Right cardiac atrium (tissue), 5 donors: ENCODE measurements at regions of chr16 and their contacts with region 1.

Region 1: DNA sequence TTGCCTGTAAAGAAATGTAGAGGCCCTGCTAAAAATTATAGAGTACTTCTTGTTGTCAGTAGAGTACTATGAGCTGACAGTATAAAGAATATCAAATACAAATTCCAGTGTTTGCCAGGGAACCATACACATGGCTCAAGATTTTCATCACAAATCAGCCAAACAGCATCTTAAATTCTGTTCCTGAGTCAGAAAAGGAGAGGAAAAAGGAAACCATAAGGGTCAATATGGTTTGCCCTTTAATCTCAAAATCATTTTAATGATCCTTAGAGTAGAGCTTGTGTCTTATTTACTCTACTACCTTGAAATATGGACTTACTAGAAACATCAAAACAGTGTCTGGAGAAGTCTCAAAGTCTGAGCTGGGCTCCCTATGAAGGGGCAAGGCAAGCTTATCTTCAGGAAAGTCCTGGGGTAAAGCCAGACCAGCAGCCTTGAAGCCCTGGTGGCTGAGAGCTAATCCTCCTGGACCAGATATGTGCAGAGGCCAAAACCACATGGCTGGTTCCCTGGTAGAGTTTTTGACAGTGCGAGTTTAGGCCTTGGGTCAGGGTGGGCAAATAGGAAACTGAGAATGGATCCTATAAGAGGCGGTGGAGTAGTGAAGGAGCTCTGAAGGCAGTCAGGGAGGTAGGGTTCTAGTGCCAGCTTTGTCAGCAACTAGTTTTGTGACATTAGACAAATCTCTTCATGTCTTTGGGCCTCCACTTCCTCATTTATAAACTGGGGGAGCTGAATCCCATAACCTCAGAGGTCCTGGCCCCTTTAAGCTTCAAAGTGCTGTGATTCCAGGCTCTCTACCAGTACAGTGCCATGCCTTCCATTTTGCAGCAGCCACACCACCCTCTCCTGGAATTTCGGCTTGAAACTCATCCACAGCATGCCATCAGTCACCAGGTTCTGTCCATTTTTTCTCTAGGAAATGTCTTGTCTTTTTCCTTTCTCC is 38.9 kb downstream of the MRTFB start:
- DNase-seq: no peak
- ATAC-seq: no peak
- H3K4me3 ChIP-seq: no peak overlapping the region
- H3K27ac ChIP-seq: peak overlapping the region; percentile 43
- H3K4me1 ChIP-seq: peaks cover 25% of the 10 kb centered on the region
- H3K27me3 ChIP-seq: no peaks in the 10 kb centered on the region

Region 2: DNA sequence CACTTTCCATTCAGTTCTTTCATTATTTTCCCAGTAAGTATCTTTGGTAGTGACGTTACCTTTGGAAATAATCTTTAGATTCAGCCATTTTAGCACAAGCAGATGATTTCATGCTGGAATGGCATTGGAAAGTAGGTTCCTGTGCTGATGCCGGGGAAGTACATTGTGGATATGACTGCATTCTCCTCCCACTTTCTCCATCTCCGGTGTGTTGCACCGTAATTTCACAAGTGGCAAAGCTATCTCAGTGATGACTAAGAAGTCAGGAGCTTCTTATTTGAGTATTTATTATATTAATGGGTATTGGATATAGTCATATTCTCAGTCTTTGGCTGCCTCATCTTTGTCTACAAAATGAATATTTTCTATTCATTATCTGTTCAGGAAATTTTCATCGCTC is 30.9 kb after region 1 on chr16:
- intact Hi-C with region 1: loop called in 1 of 4 experiments (anchors 5 kb)
- DNase-seq: peak in 1 of 3 donors; percentile 27
- ATAC-seq: no peak
- H3K4me3 ChIP-seq: no peak overlapping the region
- H3K27ac ChIP-seq: no peak overlapping the region
- H3K4me1 ChIP-seq: no peaks in the 10 kb centered on the region
- H3K27me3 ChIP-seq: no peaks in the 10 kb centered on the region